Head of caudate nucleus (tissue), 42 donors: ENCODE measurements at regions of chr9 and their contacts with region 1.

Region 1: DNA sequence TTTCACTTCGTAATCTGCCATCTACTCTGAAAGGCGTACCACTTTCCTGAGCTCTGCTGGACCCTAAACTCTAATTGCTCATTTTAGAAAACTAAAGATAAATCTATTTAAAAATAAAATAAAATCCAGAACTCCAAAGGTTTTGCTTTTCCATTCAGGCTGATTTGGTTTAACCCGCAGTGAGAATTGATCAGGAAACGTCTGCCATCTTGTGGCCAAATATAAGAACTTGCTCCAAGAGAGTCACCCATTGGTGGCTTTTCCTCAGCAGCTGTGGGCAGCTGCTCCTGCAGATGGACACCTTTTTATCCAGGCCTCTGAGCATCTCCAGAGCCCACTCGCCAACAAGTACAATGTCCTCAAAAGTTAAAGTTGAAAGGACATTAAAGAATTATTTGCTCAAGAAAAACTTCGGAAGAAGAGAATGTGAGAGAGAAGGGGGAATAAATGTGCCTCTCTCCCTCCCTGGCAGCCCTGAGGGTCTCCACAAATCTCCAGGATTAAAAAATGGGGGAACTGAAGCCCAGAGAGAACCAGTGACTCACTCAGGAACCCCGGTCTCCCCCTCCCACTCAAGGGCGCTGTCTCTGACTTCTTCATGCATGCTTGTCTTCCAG is 4.1 kb downstream of the SAXO1 start:
- DNase-seq: peak in 30 of 42 donors; percentile 15 to 81 (median 54)

Region 2: DNA sequence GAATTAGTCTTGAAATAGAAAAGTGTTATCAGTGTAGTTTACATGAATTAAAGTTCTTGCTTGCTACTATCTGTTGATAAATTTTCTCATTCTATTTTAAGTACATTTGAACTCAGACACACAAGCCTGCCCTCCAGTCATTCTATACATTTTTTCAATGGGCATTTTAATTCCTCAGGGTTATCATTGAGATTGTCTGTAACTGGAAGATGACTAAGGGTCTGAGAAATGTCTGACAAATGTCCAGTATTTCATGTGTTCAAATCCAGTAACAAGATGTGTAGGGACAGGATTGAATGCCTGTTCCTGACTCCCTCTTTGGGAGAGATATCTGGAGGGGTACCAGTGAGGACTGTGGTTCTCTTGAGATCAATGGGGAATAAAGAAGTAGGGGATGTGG is 778.9 kb before region 1 on chr9:
- intact Hi-C with region 1: loop called (anchors 5 kb)
- DNase-seq: no peak